Gastrocnemius medialis (tissue), 4 donors: ENCODE measurements at regions of chr6 and their contacts with region 1.

Region 1: GRCh38 chr6:142946181-142946923 is 1.4 kb upstream of the HIVEP2 start:
- DNase-seq: peak; percentile 99
- ATAC-seq: peak; percentile 66 to 68
- H3K4me3 ChIP-seq: peak overlapping the region; percentile 82 to 98 (median 88)
- H3K27ac ChIP-seq: peak overlapping the region; percentile 94 to 100 (median 98)
- H3K4me1 ChIP-seq: peaks cover 28 to 33% of the 10 kb centered on the region in 2 donors
- H3K27me3 ChIP-seq: no peaks in the 10 kb centered on the region
- CTCF ChIP-seq: no peak
- POLR2A ChIP-seq: peak; percentile 91 to 96

Region 2: DNA sequence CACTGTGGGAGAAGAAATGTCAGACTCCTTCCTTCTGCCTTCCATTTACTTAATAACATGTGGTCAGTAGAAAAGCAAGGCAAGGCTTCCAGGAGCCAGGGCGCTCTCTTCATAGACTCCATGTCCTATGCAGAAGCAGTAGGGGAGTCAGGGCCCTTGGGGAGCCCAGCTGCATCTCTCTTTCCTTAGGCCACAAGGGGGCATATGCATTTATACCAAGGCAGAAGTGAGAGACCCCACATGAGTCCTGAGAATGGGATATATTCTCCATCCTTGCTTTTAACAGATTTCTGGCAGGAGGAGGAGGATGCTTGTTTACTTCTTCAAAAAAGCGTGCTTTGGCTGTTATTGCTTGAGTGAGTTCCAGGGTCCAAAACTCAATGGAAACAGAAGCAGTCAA is 199.8 kb before region 1 on chr6:
- in situ Hi-C with region 1: no loop called
- intact Hi-C with region 1: loop called (anchors 2 kb)
- DNase-seq: no peak
- ATAC-seq: no peak
- H3K4me3 ChIP-seq: no peak overlapping the region
- H3K27ac ChIP-seq: no peak overlapping the region
- H3K4me1 ChIP-seq: no peaks in the 10 kb centered on the region
- H3K27me3 ChIP-seq: no peaks in the 10 kb centered on the region
- CTCF ChIP-seq: peak in 4 of 5 experiments; percentile 15 to 53 (median 39)
- POLR2A ChIP-seq: no peak

Region 3: DNA sequence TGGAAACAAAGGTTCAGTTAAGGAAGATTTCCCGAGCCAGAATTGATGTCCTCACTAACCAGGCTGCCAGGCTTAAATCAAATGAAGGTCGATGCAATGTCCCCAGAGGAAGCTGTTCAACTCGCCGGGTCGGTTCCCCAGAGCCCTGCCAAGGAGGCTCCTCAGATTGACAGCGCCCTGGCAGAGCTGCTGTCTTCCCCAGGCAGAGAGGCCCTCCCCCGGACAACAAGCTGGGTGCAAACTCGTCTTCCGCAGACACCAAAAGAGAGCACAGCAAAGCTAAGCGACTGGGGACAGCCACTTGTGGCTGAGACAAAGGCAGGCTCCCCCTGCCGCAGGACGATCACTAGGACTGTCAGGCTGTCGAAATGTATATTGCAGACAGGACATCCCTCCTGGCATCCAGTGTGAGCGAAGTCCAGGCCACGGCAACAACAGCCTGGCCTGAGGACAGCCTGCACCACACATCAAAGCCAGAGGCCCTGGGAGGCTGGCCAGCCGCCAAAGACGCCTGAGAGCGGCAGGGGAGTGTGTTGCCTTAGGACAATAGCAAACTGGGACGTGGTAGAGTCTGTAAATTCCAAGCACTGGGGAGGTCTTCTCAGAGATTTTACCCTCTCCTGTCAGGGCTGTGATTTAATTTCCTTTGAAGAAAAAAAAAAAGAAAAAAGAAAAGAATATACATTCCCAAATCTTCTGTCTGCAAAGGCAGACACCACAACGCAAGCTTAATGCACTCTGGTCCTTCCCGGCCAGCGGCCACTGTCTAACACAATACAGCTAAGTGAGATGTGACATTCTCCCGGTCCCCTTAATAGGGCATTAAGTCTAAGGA is 100.5 kb before region 1 on chr6:
- in situ Hi-C with region 1: loop called in 2 of 4 experiments (anchors 10 to 25 kb)
- intact Hi-C with region 1: loop called (anchors 1 kb)
- DNase-seq: peak; percentile 88
- ATAC-seq: peak; percentile 73 to 77
- H3K4me3 ChIP-seq: peak overlapping the region; percentile 44 to 50 (median 48)
- H3K27ac ChIP-seq: peak overlapping the region; percentile 85 to 93 (median 91)
- H3K4me1 ChIP-seq: peaks cover 75 to 85% of the 10 kb centered on the region in 2 donors
- H3K27me3 ChIP-seq: no peaks in the 10 kb centered on the region
- CTCF ChIP-seq: peak in 3 of 5 experiments; percentile 12 to 27 (median 17)
- POLR2A ChIP-seq: peak; percentile 55 to 74

Region 4: GRCh38 chr6:142893075-142893474 is 53.3 kb before region 1 on chr6:
- in situ Hi-C with region 1: loop called in 1 of 4 experiments (anchors 10 kb)
- intact Hi-C with region 1: no loop called
- DNase-seq: no peak
- ATAC-seq: peak in 1 of 2 donors; percentile 20
- H3K4me3 ChIP-seq: peak overlapping the region; percentile 37 to 46 (median 45)
- H3K27ac ChIP-seq: peak overlapping the region; percentile 71 to 86 (median 81)
- H3K4me1 ChIP-seq: peaks cover 49 to 66% of the 10 kb centered on the region in 2 donors
- H3K27me3 ChIP-seq: no peaks in the 10 kb centered on the region
- CTCF ChIP-seq: no peak
- POLR2A ChIP-seq: no peak

Region 5: GRCh38 chr6:143060354-143060805 is 114.0 kb after region 1 on chr6:
- in situ Hi-C with region 1: loop called in 2 of 4 experiments (anchors 5 to 10 kb)
- intact Hi-C with region 1: loop called (anchors 1 kb)
- DNase-seq: peak; percentile 65 to 84
- ATAC-seq: peak; percentile 57 to 69
- H3K4me3 ChIP-seq: peak overlapping the region; percentile 81 to 97 (median 89)
- H3K27ac ChIP-seq: peak overlapping the region; percentile 96 to 100 (median 98)
- H3K4me1 ChIP-seq: peaks cover 28 to 36% of the 10 kb centered on the region in 2 donors
- H3K27me3 ChIP-seq: no peaks in the 10 kb centered on the region
- CTCF ChIP-seq: peak in 1 of 5 experiments; percentile 22
- POLR2A ChIP-seq: peak; percentile 65 to 76